H1 (cell line): ENCODE measurements at regions of chr22 and their contacts with region 1.

Region 1: GRCh38 chr22:41397143-41397811 is 15.5 kb downstream of the TEF start:
- DNase-seq: no peak
- H3K4me3 ChIP-seq: no peak overlapping the region
- H3K27ac ChIP-seq: no peak overlapping the region
- H3K4me1 ChIP-seq: peaks cover 0 to 3% (median 0%) of the 10 kb centered on the region in 4 experiments; a peak in 1 of 7 replicates
- H3K27me3 ChIP-seq: no peaks in the 10 kb centered on the region
- CTCF ChIP-seq: no peak
- EP300 ChIP-seq: no peak
- POLR2A ChIP-seq: no peak
- RAD21 ChIP-seq: no peak

Region 2: GRCh38 chr22:41181349-41182241 is 215.7 kb before region 1 on chr22:
- CTCF ChIA-PET with region 1: no interaction called
- POLR2A ChIA-PET with region 1: no interaction called
- DNase-seq: no peak
- H3K4me3 ChIP-seq: no peak overlapping the region
- H3K27ac ChIP-seq: no peak overlapping the region
- H3K4me1 ChIP-seq: peaks cover 0 to 5% (median 4%) of the 10 kb centered on the region in 4 experiments; a peak in 5 of 7 replicates
- H3K27me3 ChIP-seq: no peaks in the 10 kb centered on the region
- CTCF ChIP-seq: no peak
- EP300 ChIP-seq: no peak
- POLR2A ChIP-seq: 0 out of 3 replicates have a peak, but pooled peaks of 1 of the 2 experiments have one; percentile 23
- RAD21 ChIP-seq: no peak

Region 3: GRCh38 chr22:41327124-41327523 is 70.2 kb before region 1 on chr22:
- CTCF ChIA-PET with region 1: no interaction called
- POLR2A ChIA-PET with region 1: no interaction called
- DNase-seq: no peak
- H3K4me3 ChIP-seq: no peak overlapping the region
- H3K27ac ChIP-seq: no peak overlapping the region
- H3K4me1 ChIP-seq: no peaks in the 10 kb centered on the region
- H3K27me3 ChIP-seq: no peaks in the 10 kb centered on the region
- CTCF ChIP-seq: no peak
- EP300 ChIP-seq: no peak
- POLR2A ChIP-seq: no peak
- RAD21 ChIP-seq: no peak

Region 4: DNA sequence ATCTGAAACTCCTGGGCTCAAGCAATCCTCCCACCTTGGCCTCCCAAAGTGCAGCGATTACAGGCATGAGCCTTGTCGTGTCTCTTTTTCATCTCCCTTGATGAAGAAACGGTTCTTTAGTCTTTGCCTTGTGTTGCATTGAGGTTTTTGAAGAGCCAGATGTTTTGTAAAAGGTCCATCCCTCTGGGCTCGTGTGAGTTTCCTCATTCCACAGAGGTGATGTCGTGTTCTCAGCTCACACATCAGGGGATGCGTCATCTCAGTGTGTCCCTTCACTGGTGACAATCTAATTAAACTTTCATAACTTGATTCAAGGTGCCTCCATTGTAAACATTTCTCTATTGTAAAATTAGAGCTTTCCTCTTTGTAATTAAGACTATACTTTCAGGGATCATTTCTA is 45.2 kb before region 1 on chr22:
- CTCF ChIA-PET with region 1: no interaction called
- POLR2A ChIA-PET with region 1: no interaction called
- DNase-seq: no peak
- H3K4me3 ChIP-seq: no peak overlapping the region
- H3K27ac ChIP-seq: no peak overlapping the region
- H3K4me1 ChIP-seq: no peaks in the 10 kb centered on the region
- H3K27me3 ChIP-seq: no peaks in the 10 kb centered on the region
- CTCF ChIP-seq: no peak
- EP300 ChIP-seq: no peak
- POLR2A ChIP-seq: no peak
- RAD21 ChIP-seq: no peak

Region 5: GRCh38 chr22:41411021-41411851 is 14.0 kb after region 1 on chr22:
- CTCF ChIA-PET with region 1: interaction called, 6 read pairs
- POLR2A ChIA-PET with region 1: interaction called, 16 read pairs
- DNase-seq: no peak
- H3K4me3 ChIP-seq: no peak overlapping the region
- H3K27ac ChIP-seq: no peak overlapping the region
- H3K4me1 ChIP-seq: peaks cover 0 to 21% (median 14%) of the 10 kb centered on the region in 4 experiments; a peak in 6 of 7 replicates
- H3K27me3 ChIP-seq: no peaks in the 10 kb centered on the region; a peak in 1 of 7 replicates
- CTCF ChIP-seq: no peak
- EP300 ChIP-seq: no peak
- POLR2A ChIP-seq: no peak
- RAD21 ChIP-seq: no peak